ENCODE measurements at regions of chr6 and their contacts with region 1.

Region 1: DNA sequence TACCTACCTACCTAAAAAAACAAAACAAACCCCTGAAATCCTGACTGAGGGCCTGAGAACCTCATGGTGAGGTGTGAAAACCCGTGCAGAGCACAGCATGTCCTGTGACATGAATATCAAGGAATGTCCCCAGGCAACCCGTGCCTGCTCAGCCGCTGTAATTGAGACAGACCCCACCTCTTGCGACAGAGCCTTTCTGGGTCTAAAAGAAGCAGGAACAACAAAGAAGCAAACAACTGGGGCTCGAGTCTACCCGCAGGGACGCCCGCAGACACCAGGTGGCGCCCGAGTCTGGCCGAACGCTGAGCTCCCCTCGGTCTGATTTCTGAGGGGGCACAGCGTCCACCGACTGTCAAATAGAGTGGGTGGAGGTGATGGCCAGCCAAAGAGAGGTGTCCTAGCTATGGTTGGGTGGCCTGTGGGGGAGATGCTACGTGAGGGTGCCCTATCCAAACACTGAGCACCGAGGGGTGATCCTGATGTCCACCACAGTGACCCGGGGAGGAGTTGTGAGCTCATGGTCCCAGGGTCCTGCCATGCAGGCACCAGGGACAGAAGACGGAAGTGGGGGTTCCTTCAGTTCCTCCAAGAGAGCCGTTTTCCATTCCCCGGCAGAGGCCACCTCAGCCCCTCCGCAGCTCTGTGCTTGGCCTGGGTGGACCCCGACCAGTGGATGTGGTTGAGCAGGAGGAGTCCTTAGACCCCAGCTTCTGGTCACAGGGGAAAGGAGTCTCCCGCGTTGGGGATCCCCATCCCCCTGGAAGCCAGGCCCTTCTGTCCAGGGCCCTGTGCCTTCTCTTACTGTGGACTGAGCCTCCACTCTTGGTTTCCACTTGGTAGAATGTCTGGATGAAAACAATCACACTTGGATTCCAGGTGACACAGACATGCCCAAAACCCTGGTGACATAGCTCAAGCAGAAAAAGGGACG is 268.2 kb downstream of the CDC5L start:
- DNase-seq: peak; percentile 52
- H3K4me3 ChIP-seq: no peak overlapping the region
- H3K27ac ChIP-seq: no peak overlapping the region
- H3K4me1 ChIP-seq: no peaks in the 10 kb centered on the region
- H3K27me3 ChIP-seq: peaks cover 11 to 23% of the 10 kb centered on the region in 2 experiments
- CTCF ChIP-seq: peak; percentile 88 to 98
- POLR2A ChIP-seq: no peak

Region 2: DNA sequence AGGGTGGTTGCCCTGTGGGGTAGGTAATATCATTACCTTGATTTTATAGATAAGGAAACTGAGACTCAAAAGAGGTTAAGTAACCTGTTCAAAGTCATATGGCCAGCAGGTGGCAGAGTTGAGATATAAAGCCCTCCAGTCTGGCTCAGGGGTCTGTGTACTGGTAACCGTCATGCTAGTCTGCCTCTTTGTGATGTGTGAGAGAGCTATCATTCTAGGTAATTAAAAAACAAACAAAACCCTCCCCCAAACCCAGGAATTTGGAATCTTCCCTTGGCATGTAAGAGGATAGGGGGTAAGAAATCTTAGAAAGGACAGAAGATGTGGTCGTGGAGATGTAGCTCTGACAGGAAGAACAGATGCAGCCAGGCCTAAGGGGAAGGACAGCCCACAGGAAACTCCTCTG is 62.1 kb before region 1 on chr6:
- CTCF ChIA-PET with region 1: interaction called, 10 read pairs
- POLR2A ChIA-PET with region 1: no interaction called
- dilution Hi-C with region 1: no loop called
- intact Hi-C with region 1: no loop called
- DNase-seq: peak; percentile 54
- H3K4me3 ChIP-seq: no peak overlapping the region
- H3K27ac ChIP-seq: no peak overlapping the region
- H3K4me1 ChIP-seq: no peaks in the 10 kb centered on the region
- H3K27me3 ChIP-seq: peaks cover 0 to 3% of the 10 kb centered on the region in 2 experiments
- CTCF ChIP-seq: peak; percentile 47 to 54
- POLR2A ChIP-seq: no peak

Region 3: GRCh38 chr6:44642870-44643529 is 12.7 kb before region 1 on chr6:
- CTCF ChIA-PET with region 1: interaction called, 14 read pairs
- POLR2A ChIA-PET with region 1: no interaction called
- dilution Hi-C with region 1: no loop called
- intact Hi-C with region 1: no loop called
- DNase-seq: no peak
- H3K4me3 ChIP-seq: no peak overlapping the region
- H3K27ac ChIP-seq: no peak overlapping the region
- H3K4me1 ChIP-seq: no peaks in the 10 kb centered on the region
- H3K27me3 ChIP-seq: no peaks in the 10 kb centered on the region
- CTCF ChIP-seq: no peak
- POLR2A ChIP-seq: no peak

Region 4: DNA sequence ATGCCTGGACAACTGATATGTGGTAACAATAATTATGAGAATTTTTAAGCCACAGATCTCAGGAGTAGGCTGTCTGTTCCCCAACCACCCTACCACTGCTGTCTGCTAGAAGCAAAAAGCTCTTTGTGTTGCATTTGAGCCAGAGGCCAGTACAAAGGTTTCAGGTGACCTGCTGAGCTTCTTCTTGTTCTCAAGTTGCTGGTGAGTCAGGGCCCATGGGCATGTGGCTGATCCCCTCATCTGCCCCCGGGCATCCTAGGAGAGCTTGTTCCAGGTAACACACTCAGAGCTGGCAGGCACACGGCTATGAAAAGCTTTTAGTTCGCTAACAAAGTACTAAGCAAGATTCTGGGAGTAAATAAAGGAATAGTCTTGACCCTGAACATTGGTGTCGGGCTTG is 17.2 kb after region 1 on chr6:
- CTCF ChIA-PET with region 1: interaction called, 20 read pairs
- POLR2A ChIA-PET with region 1: no interaction called
- dilution Hi-C with region 1: no loop called
- intact Hi-C with region 1: no loop called
- DNase-seq: no peak
- H3K4me3 ChIP-seq: no peak overlapping the region
- H3K27ac ChIP-seq: no peak overlapping the region
- H3K4me1 ChIP-seq: no peaks in the 10 kb centered on the region
- H3K27me3 ChIP-seq: peaks cover 0 to 1% of the 10 kb centered on the region in 2 experiments
- CTCF ChIP-seq: no peak
- POLR2A ChIP-seq: no peak

Region 5: DNA sequence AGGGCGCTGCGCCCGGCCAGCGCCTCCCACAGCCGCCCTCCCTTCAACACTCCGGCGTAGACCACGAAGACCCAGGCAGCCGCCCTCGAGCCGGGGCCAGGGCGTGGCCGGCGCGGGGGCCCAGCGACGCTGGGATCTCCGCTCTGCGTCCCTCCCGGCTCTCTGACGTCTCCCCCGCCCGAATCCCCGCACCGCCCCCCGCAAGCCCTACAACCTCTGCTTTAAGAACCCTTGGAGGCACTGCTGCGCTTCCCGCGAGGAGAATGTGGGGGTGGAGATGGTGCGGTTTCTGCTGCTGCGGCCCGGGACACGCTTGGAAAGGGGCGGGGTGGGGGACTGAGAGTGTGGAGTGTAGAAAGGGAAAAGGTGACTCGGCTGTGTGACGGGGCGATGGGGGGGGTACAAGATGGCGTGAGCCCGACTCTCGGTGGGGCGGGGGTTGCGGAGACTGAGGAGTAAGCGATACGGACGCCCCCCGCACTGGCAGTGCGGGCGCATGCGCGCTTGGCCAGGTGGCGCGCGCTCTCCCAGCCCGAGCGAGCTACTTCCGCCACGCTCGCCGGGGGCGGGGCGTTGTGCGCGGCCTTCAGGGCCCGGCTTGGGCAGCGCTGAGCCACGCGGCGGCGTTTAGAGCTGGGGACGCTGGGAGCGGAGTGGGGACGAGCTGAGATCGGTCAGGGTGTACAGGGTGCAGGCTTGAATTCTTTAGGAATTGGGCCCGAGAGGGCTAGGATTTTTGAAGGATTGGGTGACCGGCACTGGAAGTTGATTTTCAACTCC is 722.1 kb after region 1 on chr6 and contains the start of gene SUPT3H:
- CTCF ChIA-PET with region 1: interaction called, 10 read pairs
- POLR2A ChIA-PET with region 1: no interaction called
- dilution Hi-C with region 1: no loop called
- intact Hi-C with region 1: loop called (anchors 1 kb)
- DNase-seq: peak; percentile 94
- H3K4me3 ChIP-seq: peak within 1 kb of the TSS; percentile 76 to 92 (median 79)
- H3K27ac ChIP-seq: peak within 1 kb of the TSS; percentile 91
- H3K4me1 ChIP-seq: peaks cover 8% of the 10 kb centered on the region
- H3K27me3 ChIP-seq: no peaks in the 10 kb centered on the region
- CTCF ChIP-seq: peak in 1 of 2 donors; percentile 26
- POLR2A ChIP-seq: peak; percentile 87
- total RNA-seq, gene SUPT3H: 8.4 and 9.8 TPM in 2 replicates

Region 6: DNA sequence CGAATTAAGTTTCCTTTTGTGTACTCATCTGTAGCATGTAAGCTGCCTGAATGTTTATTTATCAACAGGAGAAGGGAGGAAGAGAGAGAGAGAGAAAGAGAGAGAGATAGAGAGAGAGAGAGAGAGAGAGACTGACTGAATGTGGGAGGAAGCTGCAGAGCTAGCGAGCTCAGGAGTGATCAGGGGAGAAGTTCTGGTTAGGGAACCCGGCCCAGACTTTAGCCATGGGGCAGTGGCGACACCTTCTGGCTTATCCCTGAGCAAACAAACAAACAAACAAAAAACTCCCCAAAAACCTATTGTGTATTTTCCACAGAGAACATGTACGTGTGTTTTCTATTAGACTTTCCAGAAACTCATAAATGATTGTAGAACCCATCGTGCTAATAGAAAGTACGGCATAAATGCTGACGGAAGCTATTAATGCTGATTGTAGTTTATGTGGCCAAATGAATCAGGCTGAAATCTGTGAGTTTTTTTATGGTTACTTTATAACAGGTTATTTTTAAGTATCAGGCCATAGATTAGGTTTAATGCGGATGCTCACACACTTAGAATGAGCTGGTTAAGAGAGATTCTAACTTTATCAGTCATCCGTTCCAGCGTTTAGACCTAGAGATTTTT is 1267.2 kb after region 1 on chr6:
- CTCF ChIA-PET with region 1: interaction called, 302 read pairs
- POLR2A ChIA-PET with region 1: no interaction called
- dilution Hi-C with region 1: no loop called
- intact Hi-C with region 1: loop called (anchors 1 kb)
- DNase-seq: peak; percentile 40
- H3K4me3 ChIP-seq: no peak overlapping the region
- H3K27ac ChIP-seq: no peak overlapping the region
- H3K4me1 ChIP-seq: no peaks in the 10 kb centered on the region
- H3K27me3 ChIP-seq: peaks cover 0 to 4% of the 10 kb centered on the region in 2 experiments
- CTCF ChIP-seq: peak; percentile 56 to 68
- POLR2A ChIP-seq: no peak